ENCODE measurements at regions of chr16 and their contacts with region 1.

Region 1: GRCh38 chr16:10509534-10510025 is 70.8 kb downstream of the EMP2 start:
- DNase-seq: peak; percentile 82 to 84
- ATAC-seq: peak; percentile 99
- H3K4me3 ChIP-seq: no peak overlapping the region
- H3K27ac ChIP-seq: no peak overlapping the region
- H3K4me1 ChIP-seq: no peaks in the 10 kb centered on the region
- CTCF ChIP-seq: peak; percentile 86
- EP300 ChIP-seq: no peak
- POLR2A ChIP-seq: no peak
- RAD21 ChIP-seq: peak; percentile 89 to 93

Region 2: DNA sequence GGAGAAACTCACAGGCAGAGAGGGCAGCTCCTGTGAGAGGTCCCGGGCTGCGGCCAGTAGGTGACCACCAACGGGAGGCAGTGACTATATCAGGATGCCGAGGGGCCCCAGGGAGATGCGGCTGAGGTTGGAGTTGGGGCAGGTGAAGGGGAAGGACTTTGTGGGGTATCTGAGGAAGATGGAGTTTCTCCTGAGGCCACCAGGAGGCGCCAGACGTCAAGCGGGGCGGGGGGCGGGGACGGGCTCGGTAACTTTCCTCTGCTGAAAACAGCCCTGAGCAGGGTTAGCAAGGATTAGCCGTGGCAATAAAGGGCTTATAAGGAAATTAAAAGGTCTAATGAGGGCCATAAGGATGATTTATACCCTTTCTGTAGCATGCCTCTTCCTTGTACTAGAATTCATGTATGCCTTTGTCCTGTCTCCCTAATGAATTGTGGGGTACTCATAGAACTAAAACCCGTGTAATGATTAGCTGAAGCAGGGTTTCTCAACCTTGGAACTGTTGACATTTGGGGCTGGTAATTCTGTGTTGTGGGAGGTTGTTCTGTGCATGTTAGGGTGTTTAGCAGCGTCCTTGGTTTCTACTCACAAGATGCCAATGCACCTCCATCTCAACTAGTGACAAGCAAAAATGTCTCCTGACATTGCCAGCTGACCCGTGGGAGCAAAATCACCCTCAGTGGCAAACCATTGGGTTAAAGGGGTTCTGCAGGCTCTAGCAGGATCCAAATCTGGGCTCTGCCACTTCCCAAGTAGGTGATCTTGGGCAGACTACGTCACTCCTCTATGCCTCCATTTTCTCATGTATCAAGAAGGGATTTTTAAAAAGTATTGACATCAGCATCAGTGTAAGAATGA is 252.6 kb before region 1 on chr16:
- CTCF ChIA-PET with region 1: interaction called, 62 read pairs
- POLR2A ChIA-PET with region 1: no interaction called
- DNase-seq: peak; percentile 38 to 56
- ATAC-seq: peak; percentile 90
- H3K4me3 ChIP-seq: no peak overlapping the region
- H3K27ac ChIP-seq: no peak overlapping the region
- H3K4me1 ChIP-seq: peaks cover 7% of the 10 kb centered on the region; the same call in 1 of the 3 replicates
- CTCF ChIP-seq: peak; percentile 68
- EP300 ChIP-seq: no peak
- POLR2A ChIP-seq: no peak
- RAD21 ChIP-seq: peak; percentile 73 to 74

Region 3: GRCh38 chr16:10314811-10315210 is 194.8 kb before region 1 on chr16:
- CTCF ChIA-PET with region 1: interaction called, 33 read pairs
- POLR2A ChIA-PET with region 1: no interaction called
- DNase-seq: no peak
- ATAC-seq: peak; percentile 43 to 59; a peak in 3 of 6 replicates
- H3K4me3 ChIP-seq: no peak overlapping the region
- H3K27ac ChIP-seq: no peak overlapping the region
- H3K4me1 ChIP-seq: 0 out of 3 replicates have a peak, but pooled peaks cover 3% of the 10 kb centered on the region
- CTCF ChIP-seq: peak; percentile 27
- EP300 ChIP-seq: no peak
- POLR2A ChIP-seq: no peak
- RAD21 ChIP-seq: peak; percentile 44 to 53; a peak in 4 of 5 replicates

Region 4: GRCh38 chr16:10616730-10617555 is 107.4 kb after region 1 on chr16:
- CTCF ChIA-PET with region 1: no interaction called
- POLR2A ChIA-PET with region 1: no interaction called
- DNase-seq: peak in 1 of 2 experiments; percentile 29
- ATAC-seq: peak; percentile 47 to 70; a peak in 5 of 6 replicates
- H3K4me3 ChIP-seq: no peak overlapping the region
- H3K27ac ChIP-seq: peak overlapping the region in 1 of 2 experiments; percentile 34; a peak in 3 of 6 replicates
- H3K4me1 ChIP-seq: peaks cover 9% of the 10 kb centered on the region; the same call in 2 of the 3 replicates
- CTCF ChIP-seq: no peak
- EP300 ChIP-seq: no peak
- POLR2A ChIP-seq: no peak
- RAD21 ChIP-seq: no peak

Region 5: DNA sequence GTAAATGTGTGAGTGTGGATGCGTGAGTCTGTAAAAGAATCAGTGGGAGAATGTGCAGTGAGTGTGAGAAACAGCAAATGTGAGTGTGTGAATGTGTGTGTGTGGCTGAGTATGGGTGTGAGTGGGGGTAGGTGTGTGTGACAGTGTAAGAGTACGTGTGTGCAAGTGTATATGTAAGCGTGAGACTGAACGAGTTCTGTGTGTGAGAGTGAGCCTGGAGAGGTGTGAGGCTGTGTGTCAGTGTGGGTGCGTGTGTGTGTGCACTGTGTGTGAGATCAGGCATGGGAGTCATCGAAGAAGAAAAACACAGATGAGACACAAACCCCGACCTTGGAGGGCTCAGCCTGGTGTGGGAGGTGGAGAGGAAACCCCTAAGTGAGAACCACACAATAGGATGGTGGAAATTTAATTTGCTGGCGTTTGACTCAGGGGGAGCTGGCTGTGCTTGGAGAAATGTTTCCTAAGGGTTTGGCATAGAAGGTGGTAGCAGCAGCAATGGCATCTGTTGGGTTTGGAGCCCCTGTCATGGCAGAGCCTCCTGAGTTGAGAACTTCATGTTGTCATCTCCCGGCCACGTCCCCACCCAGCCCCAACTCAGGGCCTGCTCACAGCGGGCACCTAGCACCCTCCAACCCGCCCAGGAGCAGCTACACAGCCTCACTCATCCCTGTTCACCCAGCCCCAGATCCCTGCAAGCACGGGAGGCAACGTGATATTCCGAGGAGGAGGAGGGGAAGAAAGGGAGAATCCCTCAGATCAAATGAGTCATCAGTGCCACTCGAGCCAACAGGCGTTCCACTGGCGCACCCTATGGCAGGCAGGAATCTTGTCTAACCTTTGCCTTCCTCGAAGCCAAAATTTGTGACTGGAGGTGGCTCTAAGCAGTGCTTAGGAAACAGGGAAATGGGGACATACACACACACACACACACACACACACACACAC is 219.8 kb after region 1 on chr16:
- CTCF ChIA-PET with region 1: interaction called, 198 read pairs
- POLR2A ChIA-PET with region 1: no interaction called
- DNase-seq: peak; percentile 71 to 80
- ATAC-seq: peak; percentile 96 to 97
- H3K4me3 ChIP-seq: no peak overlapping the region
- H3K27ac ChIP-seq: peak overlapping the region; percentile 54 to 74; a peak in 3 of 6 replicates
- H3K4me1 ChIP-seq: peaks cover 12% of the 10 kb centered on the region; the same call in 2 of the 3 replicates
- CTCF ChIP-seq: peak; percentile 31; the same call in 1 of the 3 replicates
- EP300 ChIP-seq: no peak
- POLR2A ChIP-seq: no peak
- RAD21 ChIP-seq: peak; percentile 69 to 70

Region 6: GRCh38 chr16:10918294-10919002 is 408.9 kb after region 1 on chr16:
- CTCF ChIA-PET with region 1: interaction called, 14 read pairs
- POLR2A ChIA-PET with region 1: no interaction called
- DNase-seq: peak; percentile 82 to 92
- ATAC-seq: peak; percentile 87 to 95
- H3K4me3 ChIP-seq: no peak overlapping the region
- H3K27ac ChIP-seq: no peak overlapping the region
- H3K4me1 ChIP-seq: no peaks in the 10 kb centered on the region
- CTCF ChIP-seq: peak; percentile 80
- EP300 ChIP-seq: no peak
- POLR2A ChIP-seq: no peak
- RAD21 ChIP-seq: peak; percentile 85 to 88